ENCODE measurements at regions of chr1 and their contacts with region 1.

Region 1: DNA sequence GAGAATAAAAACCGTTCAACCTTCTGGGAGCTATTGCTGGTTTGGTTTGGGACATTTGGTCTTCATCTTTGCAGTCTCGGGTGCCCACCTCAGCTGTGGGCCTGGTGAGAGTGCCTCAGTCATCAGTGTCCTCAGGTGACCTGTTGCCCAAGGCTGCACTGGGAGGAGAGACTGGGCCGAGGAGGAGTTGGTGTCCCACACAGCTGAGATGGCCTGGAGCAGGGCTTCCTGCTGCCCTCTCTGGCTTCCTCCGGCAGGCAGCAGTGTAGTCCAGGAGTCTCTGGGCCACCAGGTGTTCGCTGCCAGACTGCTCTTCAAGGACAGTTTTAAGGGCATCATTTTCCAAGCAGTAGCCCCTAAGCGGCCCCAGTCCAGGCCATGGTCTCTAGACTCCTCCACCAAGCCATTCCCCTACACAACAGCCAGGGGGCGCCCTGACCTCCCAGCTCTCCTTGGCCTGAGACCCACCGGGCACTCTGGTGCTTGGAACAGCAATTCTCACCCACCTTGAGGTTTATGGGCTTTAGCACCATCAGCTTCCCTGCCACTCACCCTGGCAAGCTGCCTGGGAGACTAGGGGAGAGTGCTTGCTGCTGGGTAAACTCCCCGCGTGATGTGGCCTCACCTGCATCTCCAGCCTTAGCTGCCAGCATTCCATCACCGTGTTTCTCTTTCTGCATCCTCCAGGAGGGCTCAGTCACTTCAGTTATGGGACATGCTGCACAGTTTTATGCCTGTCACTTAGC is 9.1 kb upstream of the SYTL1 start:
- DNase-seq: peak; percentile 73
- H3K4me3 Mint-ChIP-seq: no peak overlapping the region
- H3K27ac Mint-ChIP-seq: peak overlapping the region; percentile 77
- H3K4me1 Mint-ChIP-seq: peaks cover 39% of the 10 kb centered on the region
- H3K27me3 Mint-ChIP-seq: no peaks in the 10 kb centered on the region

Region 2: GRCh38 chr1:27216466-27216865 is 116.2 kb before region 1 on chr1:
- CTCF ChIA-PET with region 1: no interaction called
- DNase-seq: no peak
- H3K4me3 Mint-ChIP-seq: no peak overlapping the region
- H3K27ac Mint-ChIP-seq: no peak overlapping the region
- H3K4me1 Mint-ChIP-seq: peaks cover 7% of the 10 kb centered on the region
- H3K27me3 Mint-ChIP-seq: no peaks in the 10 kb centered on the region

Region 3: DNA sequence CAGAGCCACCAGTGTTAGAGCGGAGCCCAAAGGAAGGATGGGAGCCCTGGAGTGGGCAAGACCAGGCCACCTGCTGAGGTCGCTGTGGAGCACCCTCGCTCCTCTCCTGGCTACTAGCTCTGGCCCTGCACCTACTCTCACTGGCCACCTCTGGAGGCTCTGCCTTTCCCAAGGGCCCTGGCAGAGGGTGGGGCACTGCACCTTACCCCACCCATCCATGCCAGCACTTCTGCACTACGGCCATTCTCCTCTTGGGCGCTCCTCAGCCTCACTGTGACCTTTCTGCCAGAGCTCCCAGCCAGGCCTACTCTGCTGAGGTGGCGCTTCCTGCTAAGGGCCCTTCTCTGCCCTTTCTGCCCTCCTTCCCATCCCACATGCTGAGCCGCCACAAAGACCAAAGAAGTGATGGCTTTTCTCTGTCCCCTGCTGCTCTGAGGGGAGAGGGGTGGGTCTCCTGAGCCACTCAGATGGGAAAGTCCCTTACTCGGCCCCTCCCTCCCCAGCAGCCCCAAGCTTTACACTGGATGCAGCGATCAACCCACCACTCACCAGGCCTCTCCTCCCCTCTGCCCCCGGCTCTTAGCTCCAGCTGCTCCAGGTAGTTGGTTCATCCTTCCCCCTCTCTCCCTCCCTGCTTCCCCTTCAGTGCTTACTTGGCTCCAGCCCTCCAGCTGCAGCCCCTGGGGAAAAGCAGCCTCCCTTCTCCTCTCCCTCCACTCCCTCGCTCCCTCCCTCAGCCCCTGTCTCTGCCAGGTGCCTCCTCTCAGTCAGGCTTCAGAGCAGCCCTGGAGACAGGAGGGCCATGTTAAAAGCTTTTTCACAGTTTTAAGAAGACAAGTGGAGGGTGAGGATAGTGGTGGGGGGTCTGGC is 25.6 kb before region 1 on chr1:
- CTCF ChIA-PET with region 1: interaction called, 23 read pairs
- DNase-seq: no peak
- H3K4me3 Mint-ChIP-seq: no peak overlapping the region
- H3K27ac Mint-ChIP-seq: no peak overlapping the region
- H3K4me1 Mint-ChIP-seq: no peaks in the 10 kb centered on the region
- H3K27me3 Mint-ChIP-seq: no peaks in the 10 kb centered on the region

Region 4: GRCh38 chr1:27321813-27322577 is 10.7 kb before region 1 on chr1 and contains the start of gene TMEM222:
- CTCF ChIA-PET with region 1: interaction called, 32 read pairs
- DNase-seq: peak; percentile 98
- H3K4me3 Mint-ChIP-seq: peak within 1 kb of the TSS; percentile 96
- H3K27ac Mint-ChIP-seq: peak within 1 kb of the TSS; percentile 92
- H3K4me1 Mint-ChIP-seq: peaks cover 41% of the 10 kb centered on the region
- H3K27me3 Mint-ChIP-seq: peaks cover 13% of the 10 kb centered on the region

Region 5: GRCh38 chr1:27357281-27358037 is 24.8 kb after region 1 on chr1:
- CTCF ChIA-PET with region 1: interaction called, 46 read pairs
- DNase-seq: peak; percentile 87
- H3K4me3 Mint-ChIP-seq: peak overlapping the region; percentile 67
- H3K27ac Mint-ChIP-seq: peak overlapping the region; percentile 88
- H3K4me1 Mint-ChIP-seq: peaks cover 41% of the 10 kb centered on the region
- H3K27me3 Mint-ChIP-seq: peaks cover 39% of the 10 kb centered on the region

Region 6: DNA sequence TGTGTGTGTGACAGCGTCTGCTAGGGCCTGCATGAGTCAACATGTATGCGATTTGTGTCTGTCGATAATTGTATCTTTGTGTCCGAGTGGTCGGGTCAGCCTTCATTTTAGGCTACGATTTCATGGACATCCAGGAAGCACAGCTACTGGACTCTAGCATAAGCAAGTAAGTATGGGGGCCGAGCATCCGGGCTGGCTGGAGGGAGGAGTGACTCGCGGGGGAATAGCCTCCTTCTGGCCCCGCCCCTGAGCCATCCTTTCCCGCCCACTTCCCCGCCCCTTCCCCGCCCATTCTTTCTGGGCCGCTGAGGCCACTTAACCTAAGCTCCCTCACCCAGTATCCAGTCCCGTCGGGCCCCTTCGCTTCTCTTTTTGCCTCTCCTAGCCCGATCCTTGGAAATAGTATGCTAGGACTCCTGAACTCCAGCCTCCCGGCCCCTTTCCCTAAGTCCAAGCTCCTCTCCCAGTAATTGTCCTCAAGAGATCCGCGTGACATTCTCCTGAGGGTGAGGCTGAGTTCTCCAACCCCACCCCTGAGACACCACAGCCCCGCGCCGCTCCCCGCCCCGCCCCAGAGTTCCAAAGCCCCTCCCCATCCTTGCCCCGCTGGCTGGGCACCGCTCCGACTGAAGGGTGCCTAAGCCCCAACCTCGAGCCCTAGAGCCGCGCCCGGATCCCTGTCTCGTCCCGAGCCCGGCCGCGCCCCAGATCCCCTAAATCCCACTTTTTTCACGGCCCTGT is 32.8 kb after region 1 on chr1:
- CTCF ChIA-PET with region 1: interaction called, 12 read pairs
- DNase-seq: peak; percentile 87
- H3K4me3 Mint-ChIP-seq: peak overlapping the region; percentile 84
- H3K27ac Mint-ChIP-seq: peak overlapping the region; percentile 81
- H3K4me1 Mint-ChIP-seq: peaks cover 53% of the 10 kb centered on the region
- H3K27me3 Mint-ChIP-seq: peaks cover 19% of the 10 kb centered on the region

Region 7: DNA sequence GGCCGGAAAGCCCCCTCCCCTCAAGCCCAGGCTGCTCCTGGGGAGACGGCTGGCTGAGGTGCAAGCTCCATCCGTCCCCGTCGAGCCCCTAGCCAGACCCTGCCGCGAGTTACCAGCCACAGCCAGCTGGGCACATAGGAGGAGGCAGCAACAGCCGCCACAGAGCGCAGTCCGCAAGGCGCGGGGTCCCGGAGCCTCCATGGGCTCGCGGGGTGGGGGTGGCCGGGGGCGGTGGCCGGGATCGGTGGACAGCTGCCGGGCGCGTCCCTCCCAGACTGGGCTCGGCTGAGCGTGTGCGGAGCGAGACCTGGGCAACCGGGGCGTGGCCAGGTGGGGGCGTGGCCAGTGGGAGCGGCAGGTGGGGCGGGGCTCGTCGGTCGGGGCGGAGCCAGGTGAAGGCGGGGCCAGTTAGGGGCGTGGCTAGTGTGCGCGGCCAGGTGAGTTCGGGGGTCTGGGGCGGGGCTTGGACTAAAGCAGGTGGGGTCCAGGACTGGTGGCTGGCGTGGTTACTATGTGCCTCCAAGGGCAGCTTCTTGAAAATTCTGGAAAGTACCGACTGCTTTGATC is 50.4 kb after region 1 on chr1 and contains the start of gene CD164L2:
- CTCF ChIA-PET with region 1: interaction called, 26 read pairs
- DNase-seq: peak; percentile 71
- H3K4me3 Mint-ChIP-seq: no peak within 1 kb of the TSS
- H3K27ac Mint-ChIP-seq: no peak within 1 kb of the TSS
- H3K4me1 Mint-ChIP-seq: no peaks in the 10 kb centered on the region
- H3K27me3 Mint-ChIP-seq: peaks cover 47% of the 10 kb centered on the region

Region 8: DNA sequence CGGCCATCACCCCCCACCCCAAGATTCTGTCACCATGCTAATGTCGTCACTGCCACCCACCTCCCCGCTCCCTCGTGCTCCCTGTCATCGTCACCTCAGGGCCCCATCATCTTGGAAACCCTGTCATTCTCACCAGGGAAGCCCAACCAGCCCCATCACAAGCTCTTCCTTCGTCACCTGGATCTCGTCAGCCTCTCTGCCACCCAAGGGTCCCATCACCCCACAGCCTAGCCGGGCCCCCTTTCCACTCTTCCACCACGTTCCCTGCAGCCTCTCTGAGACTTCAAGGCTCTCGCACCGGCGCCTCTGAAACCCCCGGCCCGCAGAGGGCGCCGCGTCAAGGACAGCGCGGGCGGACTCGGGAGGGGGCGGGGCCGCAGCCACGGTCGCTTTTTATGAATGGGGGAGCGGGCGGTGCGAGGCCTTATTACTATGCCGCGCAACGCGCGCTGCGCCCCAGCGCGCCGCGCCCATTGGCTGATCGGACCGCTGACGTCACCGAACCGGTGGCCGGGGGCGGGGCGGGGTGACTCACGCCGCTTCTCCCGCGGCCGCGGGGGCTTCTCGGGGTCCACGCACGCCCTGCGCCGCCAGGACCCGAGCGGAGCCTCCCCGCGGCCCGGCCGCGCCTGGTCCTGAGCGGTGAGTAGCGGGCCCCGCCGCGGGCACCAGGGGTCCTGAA is 59.5 kb after region 1 on chr1 and contains the start of gene GPR3:
- CTCF ChIA-PET with region 1: interaction called, 26 read pairs
- DNase-seq: peak; percentile 96
- H3K4me3 Mint-ChIP-seq: peak within 1 kb of the TSS; percentile 71
- H3K27ac Mint-ChIP-seq: peak within 1 kb of the TSS; percentile 55
- H3K4me1 Mint-ChIP-seq: peaks cover 22% of the 10 kb centered on the region
- H3K27me3 Mint-ChIP-seq: peaks cover 35% of the 10 kb centered on the region

Measured in activated naive CD4-positive, alpha-beta T cell treated with anti-CD3 and anti-CD28 coated beads, Interleukin-2, amount 10 ng/mL, durations not matched to agents 7 days and 5 days (primary cell).